T-cell (primary cell): ENCODE measurements at regions of chr11 and their contacts with region 1.

Region 1: DNA sequence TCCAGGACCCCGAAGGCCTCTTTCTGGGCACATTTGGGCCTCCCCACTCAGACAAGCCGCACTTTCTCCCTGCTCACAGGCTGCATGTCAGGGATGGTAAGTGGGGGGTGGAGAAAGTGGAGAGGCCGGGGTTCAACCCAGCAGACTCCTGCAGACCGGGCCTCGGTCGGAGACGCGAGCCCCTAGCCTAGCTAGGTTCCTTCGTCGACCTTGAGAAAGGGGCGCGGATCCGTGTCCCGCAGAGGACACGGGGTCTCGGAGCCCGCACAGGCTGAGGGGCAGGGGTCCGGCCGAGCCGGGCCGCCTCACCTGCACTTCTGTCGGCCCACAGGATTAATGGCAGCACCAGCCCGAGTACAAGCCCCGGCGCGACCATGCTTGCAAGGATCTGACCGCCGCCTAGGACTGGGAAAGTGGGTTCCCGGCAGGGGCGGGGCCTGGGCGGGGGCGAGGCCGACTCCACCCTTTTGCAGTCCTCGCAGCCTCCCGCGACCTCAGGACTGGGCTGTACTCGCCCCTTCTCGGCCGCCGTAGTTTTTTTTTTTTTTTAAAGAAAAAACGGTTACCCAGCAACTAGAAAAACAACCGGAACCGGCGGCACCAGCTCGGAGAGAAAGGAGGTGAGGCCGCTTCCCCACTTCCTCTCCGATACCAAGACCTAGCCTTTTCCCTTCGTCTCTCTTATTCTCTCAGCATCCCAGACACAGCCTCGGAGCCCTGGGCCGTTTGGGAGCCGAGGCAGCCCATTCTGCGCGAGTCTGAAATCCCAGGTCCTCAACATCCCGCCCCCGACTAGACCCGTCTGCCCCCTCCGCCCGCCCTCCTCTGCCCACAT is at the starts of genes SIAE and SPA17:
- DNase-seq: peak; percentile 58 to 92 (median 75)
- ATAC-seq: peak; percentile 78 to 85 (median 82)
- H3K4me3 ChIP-seq: peak within 1 kb of the TSS; percentile 71 to 77
- H3K4me3 Mint-ChIP-seq: peak within 1 kb of the TSS; percentile 80 to 88 (median 84)
- H3K27ac ChIP-seq: peak within 1 kb of the TSS; percentile 78
- H3K27ac Mint-ChIP-seq: peak within 1 kb of the TSS; percentile 91
- H3K4me1 ChIP-seq: peaks cover 30 to 33% of the 10 kb centered on the region in 2 experiments
- H3K4me1 Mint-ChIP-seq: peaks cover 29 to 34% (median 31%) of the 10 kb centered on the region in 3 donors
- H3K27me3 ChIP-seq: no peaks in the 10 kb centered on the region
- H3K27me3 Mint-ChIP-seq: no peaks in the 10 kb centered on the region
- total RNA-seq, gene SIAE: 3.7 to 9.7 (median 6.2) TPM
- total RNA-seq, gene SPA17: 0.28 to 0.92 (median 0.59) TPM

Region 2: GRCh38 chr11:124612045-124612444 is 61.5 kb before region 1 on chr11:
- CTCF ChIA-PET with region 1: no interaction called
- POLR2A ChIA-PET with region 1: no interaction called
- DNase-seq: peak in 5 of 35 experiments; percentile 1 to 25 (median 5)
- ATAC-seq: peak; percentile 58 to 80 (median 70)
- H3K4me3 ChIP-seq: no peak overlapping the region
- H3K4me3 Mint-ChIP-seq: no peak overlapping the region
- H3K27ac ChIP-seq: no peak overlapping the region
- H3K27ac Mint-ChIP-seq: peak overlapping the region in 1 of 2 donors; percentile 80
- H3K4me1 ChIP-seq: peaks cover 0 to 4% of the 10 kb centered on the region in 2 experiments
- H3K4me1 Mint-ChIP-seq: peaks cover 7 to 8% (median 8%) of the 10 kb centered on the region in 3 donors
- H3K27me3 ChIP-seq: no peaks in the 10 kb centered on the region
- H3K27me3 Mint-ChIP-seq: peaks cover 6 to 8% of the 10 kb centered on the region in 2 donors

Region 3: DNA sequence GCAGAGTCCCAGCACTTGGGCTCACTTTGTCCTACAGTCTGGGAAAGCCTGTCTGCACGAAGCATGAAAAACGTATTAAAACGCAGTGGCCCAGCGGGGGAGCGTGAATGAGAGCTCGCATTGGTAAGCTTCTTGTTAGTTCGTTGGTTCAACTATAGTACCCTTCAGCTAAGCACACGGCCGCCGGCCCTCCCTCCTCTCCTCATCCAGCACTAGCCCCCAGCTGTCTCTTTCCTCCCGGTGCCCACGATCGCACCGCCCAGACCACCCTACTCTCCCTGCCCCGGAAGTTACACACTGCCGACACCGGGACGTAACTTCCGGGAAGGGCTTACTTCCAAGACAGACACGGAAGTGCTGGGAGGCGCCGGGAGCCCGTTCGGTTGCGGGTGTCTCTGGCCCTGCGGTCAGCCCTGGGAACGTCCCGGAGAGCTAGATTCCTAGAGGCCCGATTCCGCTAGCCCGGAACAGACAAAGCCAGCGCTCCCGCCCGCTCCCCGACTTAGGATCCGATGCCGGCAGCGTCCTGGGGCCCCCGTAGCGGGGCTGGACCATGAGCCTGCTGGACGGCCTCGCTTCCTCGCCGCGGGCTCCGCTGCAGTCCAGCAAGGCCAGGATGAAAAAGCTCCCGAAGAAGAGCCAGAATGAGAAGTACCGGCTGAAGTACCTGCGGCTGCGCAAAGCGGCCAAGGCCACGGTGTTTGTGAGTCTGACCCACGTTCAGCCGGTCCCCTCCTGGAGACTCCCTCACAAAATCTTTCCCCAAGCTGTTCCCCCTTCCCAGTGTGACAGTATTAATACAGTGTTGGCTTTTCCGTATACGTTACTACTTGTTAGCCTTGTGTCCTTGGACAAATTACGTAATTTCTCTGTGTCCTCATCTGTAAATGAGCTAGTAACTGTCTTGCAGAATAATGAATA is 50.8 kb before region 1 on chr11 and contains the start of gene TBRG1:
- CTCF ChIA-PET with region 1: interaction called in 1 of 2 experiments, 14 read pairs
- POLR2A ChIA-PET with region 1: interaction called in 1 of 2 experiments, 6 read pairs
- DNase-seq: peak; percentile 55 to 91 (median 79)
- ATAC-seq: peak; percentile 96 to 99 (median 98)
- H3K4me3 ChIP-seq: peak within 1 kb of the TSS; percentile 84 to 90
- H3K4me3 Mint-ChIP-seq: peak within 1 kb of the TSS; percentile 95 to 99 (median 96)
- H3K27ac ChIP-seq: peak within 1 kb of the TSS; percentile 76
- H3K27ac Mint-ChIP-seq: peak within 1 kb of the TSS; percentile 98
- H3K4me1 ChIP-seq: peaks cover 17% of the 10 kb centered on the region in 2 experiments
- H3K4me1 Mint-ChIP-seq: peaks cover 40 to 48% (median 45%) of the 10 kb centered on the region in 3 donors
- H3K27me3 ChIP-seq: no peaks in the 10 kb centered on the region
- H3K27me3 Mint-ChIP-seq: peaks cover 10 to 13% of the 10 kb centered on the region in 2 donors
- total RNA-seq, gene TBRG1: 55.5 to 74.8 (median 72.0) TPM

Region 4: GRCh38 chr11:124746621-124747243 is 73.2 kb after region 1 on chr11:
- CTCF ChIA-PET with region 1: interaction called, 6 to 23 read pairs
- POLR2A ChIA-PET with region 1: interaction called, 3 to 5 read pairs
- DNase-seq: peak; percentile 57 to 86 (median 72)
- ATAC-seq: peak; percentile 88 to 91 (median 89)
- H3K4me3 ChIP-seq: peak overlapping the region; percentile 76 to 99
- H3K4me3 Mint-ChIP-seq: peak overlapping the region; percentile 93 to 97 (median 97)
- H3K27ac ChIP-seq: peak overlapping the region; percentile 70
- H3K27ac Mint-ChIP-seq: peak overlapping the region; percentile 91 to 98
- H3K4me1 ChIP-seq: peaks cover 2 to 23% of the 10 kb centered on the region in 2 experiments
- H3K4me1 Mint-ChIP-seq: peaks cover 13 to 29% (median 16%) of the 10 kb centered on the region in 3 donors
- H3K27me3 ChIP-seq: peaks cover 0 to 14% of the 10 kb centered on the region in 2 experiments
- H3K27me3 Mint-ChIP-seq: peaks cover 2 to 6% of the 10 kb centered on the region in 2 donors

Region 5: GRCh38 chr11:124793466-124794278 is 120.1 kb after region 1 on chr11:
- CTCF ChIA-PET with region 1: interaction called, 4 to 27 read pairs
- POLR2A ChIA-PET with region 1: interaction called in 1 of 2 experiments, 4 read pairs
- DNase-seq: peak in 5 of 35 experiments; percentile 3 to 68 (median 13)
- ATAC-seq: peak in 3 of 4 experiments; percentile 52 to 64 (median 53)
- H3K4me3 ChIP-seq: no peak overlapping the region
- H3K4me3 Mint-ChIP-seq: no peak overlapping the region
- H3K27ac ChIP-seq: no peak overlapping the region
- H3K27ac Mint-ChIP-seq: no peak overlapping the region
- H3K4me1 ChIP-seq: peaks cover 0 to 5% of the 10 kb centered on the region in 2 experiments
- H3K4me1 Mint-ChIP-seq: peaks cover 42 to 50% (median 44%) of the 10 kb centered on the region in 3 donors
- H3K27me3 ChIP-seq: no peaks in the 10 kb centered on the region
- H3K27me3 Mint-ChIP-seq: no peaks in the 10 kb centered on the region

Region 6: DNA sequence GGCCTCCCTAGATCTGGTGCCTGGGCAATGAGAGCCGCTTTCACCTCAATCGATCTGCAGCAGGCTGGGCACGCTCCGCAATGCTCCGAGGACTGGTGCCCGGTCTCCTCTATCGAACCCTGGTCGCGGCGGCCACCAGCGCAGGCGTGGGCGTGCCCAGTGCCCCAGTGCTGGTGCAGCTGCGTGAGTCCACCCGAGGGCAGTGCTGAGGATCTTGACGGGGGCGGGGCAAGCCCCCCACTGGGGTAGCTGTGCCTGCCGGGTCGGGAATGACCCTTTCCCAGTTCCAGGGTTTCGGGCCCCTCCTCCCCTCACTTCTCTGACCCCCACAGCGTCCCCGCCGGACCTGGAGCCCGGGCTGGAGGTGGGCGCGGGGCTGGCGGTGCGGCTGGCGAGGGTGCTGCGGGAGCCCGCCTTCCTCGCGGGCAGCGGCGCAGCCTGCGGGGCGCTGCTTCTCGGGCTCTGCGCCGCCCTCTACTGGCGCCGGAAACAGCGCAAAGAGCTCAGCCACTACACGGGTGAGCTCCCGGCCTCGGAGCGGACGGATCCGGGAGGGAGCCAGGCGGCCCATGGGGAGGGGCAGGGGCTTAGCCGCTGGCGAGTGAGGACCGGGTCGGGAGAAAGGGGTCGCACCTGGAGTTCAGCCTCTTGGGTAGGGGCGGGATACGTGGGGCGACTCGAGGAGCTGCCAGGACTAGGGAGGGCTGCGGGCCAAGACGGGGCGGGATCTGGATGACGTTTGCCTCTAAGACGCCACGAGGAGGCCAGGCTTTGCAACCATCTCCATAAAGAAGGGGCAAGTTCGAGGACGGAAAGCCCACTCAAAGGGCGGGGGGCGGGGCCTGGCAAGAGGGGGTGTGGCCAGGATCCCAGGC is 202.6 kb after region 1 on chr11:
- CTCF ChIA-PET with region 1: interaction called in 1 of 2 experiments, 20 read pairs
- POLR2A ChIA-PET with region 1: no interaction called
- DNase-seq: peak; percentile 54 to 87 (median 70)
- ATAC-seq: peak; percentile 93 to 96 (median 94)
- H3K4me3 ChIP-seq: peak overlapping the region; percentile 64 to 81
- H3K4me3 Mint-ChIP-seq: peak overlapping the region; percentile 83 to 84 (median 83)
- H3K27ac ChIP-seq: peak overlapping the region; percentile 68
- H3K27ac Mint-ChIP-seq: peak overlapping the region in 1 of 2 donors; percentile 72
- H3K4me1 ChIP-seq: peaks cover 0 to 24% of the 10 kb centered on the region in 2 experiments
- H3K4me1 Mint-ChIP-seq: peaks cover 21 to 26% (median 23%) of the 10 kb centered on the region in 3 donors
- H3K27me3 ChIP-seq: peaks cover 0 to 53% of the 10 kb centered on the region in 2 experiments
- H3K27me3 Mint-ChIP-seq: peaks cover 30 to 35% of the 10 kb centered on the region in 2 donors